Panc1 (cell line): ENCODE measurements at regions of chr20 and their contacts with region 1.

Region 1: GRCh38 chr20:31987744-31988143 is 19.8 kb downstream of the XKR7 start:
- DNase-seq: peak; percentile 59
- ATAC-seq: peak; percentile 58
- H3K4me3 ChIP-seq: no peak overlapping the region
- H3K27ac ChIP-seq: peak overlapping the region; percentile 74
- H3K4me1 ChIP-seq: peaks cover 36% of the 10 kb centered on the region
- H3K27me3 ChIP-seq: no peaks in the 10 kb centered on the region
- CTCF ChIP-seq: no peak

Region 2: GRCh38 chr20:31691646-31692275 is 296.0 kb before region 1 on chr20:
- CTCF ChIA-PET with region 1: no interaction called
- POLR2A ChIA-PET with region 1: interaction called, 10 read pairs
- in situ Hi-C with region 1: no loop called
- intact Hi-C with region 1: no loop called
- DNase-seq: no peak
- ATAC-seq: no peak
- H3K4me3 ChIP-seq: no peak overlapping the region
- H3K27ac ChIP-seq: no peak overlapping the region
- H3K4me1 ChIP-seq: peaks cover 37% of the 10 kb centered on the region
- H3K27me3 ChIP-seq: no peaks in the 10 kb centered on the region
- CTCF ChIP-seq: no peak

Region 3: DNA sequence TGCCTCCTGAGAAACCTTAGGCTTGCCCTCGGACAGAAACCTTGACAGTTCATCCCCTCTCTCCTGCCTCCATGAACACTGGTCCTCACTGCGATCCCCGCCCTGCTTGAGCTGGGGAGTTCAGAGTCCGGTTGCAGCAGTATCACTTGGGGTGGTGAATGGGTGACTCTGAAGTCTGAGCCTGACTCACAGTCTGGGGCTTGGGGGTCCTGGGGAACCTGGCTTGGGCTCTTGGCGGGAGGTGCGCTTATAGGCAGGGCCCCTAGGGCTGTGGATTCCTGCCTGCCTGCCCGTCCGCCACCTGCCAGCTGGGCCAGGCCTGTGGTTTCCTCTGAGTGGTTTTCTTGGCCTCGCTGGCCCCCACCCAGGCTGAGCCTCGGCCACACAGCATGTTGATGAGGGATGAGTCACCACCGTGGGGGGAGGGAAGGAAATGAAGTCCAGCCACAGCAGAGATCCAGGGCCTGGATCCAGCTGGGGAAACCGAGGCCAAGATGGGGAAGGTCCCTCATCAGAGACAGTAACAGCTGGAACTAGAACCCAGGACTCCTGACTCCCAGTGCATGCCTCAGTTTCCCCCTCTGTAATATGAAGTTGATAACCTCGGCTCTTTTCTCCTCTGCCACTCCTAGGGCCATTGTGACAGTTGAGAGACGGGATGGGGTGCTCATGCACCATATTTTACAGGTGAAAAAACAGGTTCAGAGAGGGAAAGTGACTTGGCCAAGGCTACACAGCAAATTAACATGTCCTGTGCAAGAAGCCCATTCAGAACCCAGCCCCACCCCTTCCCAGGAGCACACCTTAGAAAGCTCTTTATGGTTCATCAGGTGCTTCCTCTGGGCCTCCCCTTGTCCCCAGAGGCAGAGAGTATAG is 151.5 kb before region 1 on chr20:
- CTCF ChIA-PET with region 1: interaction called, 11 read pairs
- POLR2A ChIA-PET with region 1: no interaction called
- in situ Hi-C with region 1: no loop called
- intact Hi-C with region 1: no loop called
- DNase-seq: no peak
- ATAC-seq: peak; percentile 81
- H3K4me3 ChIP-seq: no peak overlapping the region; a peak in 1 of 4 replicates
- H3K27ac ChIP-seq: peak overlapping the region; percentile 86
- H3K4me1 ChIP-seq: peaks cover 72% of the 10 kb centered on the region
- H3K27me3 ChIP-seq: no peaks in the 10 kb centered on the region
- CTCF ChIP-seq: no peak

Region 4: GRCh38 chr20:32098786-32099185 is 111.0 kb after region 1 on chr20:
- CTCF ChIA-PET with region 1: no interaction called
- POLR2A ChIA-PET with region 1: no interaction called
- in situ Hi-C with region 1: no loop called
- intact Hi-C with region 1: no loop called
- DNase-seq: no peak
- ATAC-seq: no peak
- H3K4me3 ChIP-seq: no peak overlapping the region
- H3K27ac ChIP-seq: no peak overlapping the region
- H3K4me1 ChIP-seq: no peaks in the 10 kb centered on the region
- H3K27me3 ChIP-seq: peaks cover 6% of the 10 kb centered on the region; the same call in 1 of the 2 replicates
- CTCF ChIP-seq: no peak